Mucosa of descending colon (tissue), 3 donors: ENCODE measurements at regions of chr6 and their contacts with region 1.

Region 1: DNA sequence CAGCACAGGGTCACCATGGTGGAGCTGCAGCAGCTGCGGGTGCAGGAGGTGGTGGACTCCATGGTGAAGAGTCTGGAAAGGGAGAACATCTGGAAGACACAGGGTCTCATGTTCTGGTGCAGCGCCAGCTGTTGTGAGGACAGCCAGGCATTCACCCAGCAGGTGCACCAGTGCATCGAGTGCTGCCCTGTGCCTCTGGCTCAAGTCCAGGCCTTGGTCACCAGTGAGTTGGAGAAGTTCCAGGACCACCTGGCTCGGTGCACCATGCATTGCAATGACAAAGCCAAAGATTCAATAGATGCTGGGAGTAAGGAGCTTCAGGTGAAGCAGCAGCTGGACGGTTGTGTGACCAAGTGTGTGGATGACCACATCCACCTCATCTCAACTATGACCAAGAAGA is 22.9 kb upstream of the RIPK1 start:
- DNase-seq: no peak
- ATAC-seq: no peak
- H3K4me3 ChIP-seq: no peak overlapping the region
- H3K4me1 ChIP-seq: no peaks in the 10 kb centered on the region
- CTCF ChIP-seq: no peak

Region 2: GRCh38 chr6:2344319-2344905 is 701.0 kb before region 1 on chr6:
- intact Hi-C with region 1: no loop called
- DNase-seq: no peak
- ATAC-seq: no peak
- H3K4me3 ChIP-seq: no peak overlapping the region
- H3K4me1 ChIP-seq: no peaks in the 10 kb centered on the region
- CTCF ChIP-seq: no peak

Region 3: DNA sequence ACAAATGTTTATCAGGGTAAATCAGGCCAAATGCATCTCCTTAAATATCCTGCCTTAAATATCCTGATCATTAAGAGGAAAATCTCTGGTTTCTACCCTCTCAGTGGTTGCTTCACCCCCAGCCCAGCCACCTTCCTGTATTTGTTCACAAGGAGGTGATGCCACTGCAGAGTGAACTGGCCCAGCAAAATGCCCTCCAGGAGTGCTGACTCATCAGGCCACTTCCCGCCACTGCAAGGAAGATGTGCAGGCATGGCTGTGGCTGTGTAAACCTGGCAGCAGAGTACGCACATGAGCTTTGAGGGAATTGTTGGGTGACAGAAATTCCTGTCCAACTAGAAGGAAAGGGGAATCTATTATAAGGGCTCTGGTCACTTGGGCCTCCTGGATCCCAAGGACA is 31.9 kb before region 1 on chr6:
- intact Hi-C with region 1: loop called in 1 of 2 experiments (anchors 5 kb)
- DNase-seq: peak in 1 of 3 donors; percentile 60
- ATAC-seq: peak; percentile 52
- H3K4me3 ChIP-seq: no peak overlapping the region
- H3K4me1 ChIP-seq: no peaks in the 10 kb centered on the region
- CTCF ChIP-seq: no peak

Region 4: GRCh38 chr6:3108746-3109414 is 63.5 kb after region 1 on chr6:
- intact Hi-C with region 1: no loop called
- DNase-seq: no peak
- ATAC-seq: peak; percentile 17
- H3K4me3 ChIP-seq: no peak overlapping the region
- H3K4me1 ChIP-seq: no peaks in the 10 kb centered on the region
- CTCF ChIP-seq: no peak